ENCODE measurements at regions of chr11 and their contacts with region 1.

Region 1: GRCh38 chr11:130002846-130003716 is 446 bp upstream of the PRDM10 start:
- DNase-seq: peak; percentile 95 to 98 (median 98)
- H3K4me3 ChIP-seq: peak overlapping the region; percentile 52 to 86 (median 75)
- H3K4me3 Mint-ChIP-seq: peak overlapping the region; percentile 89 to 98
- H3K27ac ChIP-seq: peak overlapping the region; percentile 99 to 100
- H3K27ac Mint-ChIP-seq: peak overlapping the region; percentile 99 to 100 (median 100)
- H3K4me1 ChIP-seq: peaks cover 32 to 39% of the 10 kb centered on the region in 2 donors
- H3K4me1 Mint-ChIP-seq: peaks cover 43% of the 10 kb centered on the region
- H3K27me3 ChIP-seq: no peaks in the 10 kb centered on the region
- H3K27me3 Mint-ChIP-seq: no peaks in the 10 kb centered on the region
- CTCF ChIP-seq: no peak

Region 2: DNA sequence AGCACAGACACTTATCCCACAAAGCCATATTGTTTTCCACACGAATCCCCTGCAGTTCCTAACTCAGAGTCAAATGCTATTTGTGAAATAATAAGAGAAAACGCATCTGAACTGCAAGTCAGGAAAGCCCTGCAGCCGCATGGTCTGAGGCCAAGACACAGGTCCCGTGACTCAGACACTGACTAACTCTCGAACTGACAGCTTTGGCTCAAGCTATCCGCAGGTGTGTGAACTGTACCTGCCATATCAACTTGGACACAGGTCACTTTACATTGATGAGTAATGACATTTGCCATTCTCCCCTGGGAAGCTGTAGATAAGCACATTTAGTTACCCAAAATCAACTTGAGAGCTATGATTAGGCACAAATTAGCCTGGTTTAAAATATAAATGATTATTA is 72.8 kb before region 1 on chr11:
- intact Hi-C with region 1: loop called in 1 of 2 experiments (anchors 2 kb)
- DNase-seq: peak; percentile 59 to 90 (median 76)
- H3K4me3 ChIP-seq: peak overlapping the region in 1 of 3 experiments; percentile 61
- H3K4me3 Mint-ChIP-seq: peak overlapping the region in 1 of 2 donors; percentile 69
- H3K27ac ChIP-seq: peak overlapping the region; percentile 86 to 91
- H3K27ac Mint-ChIP-seq: peak overlapping the region; percentile 90 to 95 (median 93)
- H3K4me1 ChIP-seq: peaks cover 35 to 46% of the 10 kb centered on the region in 2 donors
- H3K4me1 Mint-ChIP-seq: peaks cover 45% of the 10 kb centered on the region
- H3K27me3 ChIP-seq: no peaks in the 10 kb centered on the region
- H3K27me3 Mint-ChIP-seq: no peaks in the 10 kb centered on the region
- CTCF ChIP-seq: no peak

Region 3: GRCh38 chr11:129973068-129973467 is 30.0 kb before region 1 on chr11:
- intact Hi-C with region 1: no loop called
- DNase-seq: peak in 1 of 3 donors; percentile 8
- H3K4me3 ChIP-seq: no peak overlapping the region
- H3K4me3 Mint-ChIP-seq: no peak overlapping the region
- H3K27ac ChIP-seq: peak overlapping the region; percentile 26 to 69
- H3K27ac Mint-ChIP-seq: peak overlapping the region in 6 of 7 donors; percentile 22 to 79 (median 61)
- H3K4me1 ChIP-seq: peaks cover 51 to 75% of the 10 kb centered on the region in 2 donors
- H3K4me1 Mint-ChIP-seq: peaks cover 77% of the 10 kb centered on the region
- H3K27me3 ChIP-seq: no peaks in the 10 kb centered on the region
- H3K27me3 Mint-ChIP-seq: peaks cover 0 to 4% (median 0%) of the 10 kb centered on the region in 3 donors
- CTCF ChIP-seq: no peak

Region 4: GRCh38 chr11:130042093-130042591 is 39.1 kb after region 1 on chr11:
- intact Hi-C with region 1: loop called in 1 of 2 experiments (anchors 2 kb)
- DNase-seq: peak; percentile 94 to 99 (median 96)
- H3K4me3 ChIP-seq: peak overlapping the region in 1 of 3 experiments; percentile 52
- H3K4me3 Mint-ChIP-seq: peak overlapping the region in 1 of 2 donors; percentile 31
- H3K27ac ChIP-seq: peak overlapping the region; percentile 86 to 94
- H3K27ac Mint-ChIP-seq: peak overlapping the region; percentile 91 to 97 (median 94)
- H3K4me1 ChIP-seq: peaks cover 43 to 56% of the 10 kb centered on the region in 2 donors
- H3K4me1 Mint-ChIP-seq: peaks cover 35% of the 10 kb centered on the region
- H3K27me3 ChIP-seq: no peaks in the 10 kb centered on the region
- H3K27me3 Mint-ChIP-seq: peaks cover 0 to 5% (median 2%) of the 10 kb centered on the region in 3 donors
- CTCF ChIP-seq: no peak

Region 5: DNA sequence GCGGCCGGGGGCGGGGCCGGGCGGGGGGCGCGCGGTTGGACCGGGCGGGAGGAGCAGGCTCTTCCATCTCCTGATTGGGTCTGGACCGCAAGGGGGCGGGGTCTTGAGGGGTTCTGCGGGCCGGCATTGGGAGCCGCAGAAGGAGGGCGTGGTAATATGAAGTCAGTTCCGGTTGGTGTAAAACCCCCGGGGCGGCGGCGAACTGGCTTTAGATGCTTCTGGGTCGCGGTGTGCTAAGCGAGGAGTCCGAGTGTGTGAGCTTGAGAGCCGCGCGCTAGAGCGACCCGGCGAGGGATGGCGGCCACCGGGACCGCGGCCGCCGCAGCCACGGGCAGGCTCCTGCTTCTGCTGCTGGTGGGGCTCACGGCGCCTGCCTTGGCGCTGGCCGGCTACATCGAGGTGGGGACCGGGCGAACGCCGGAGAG is 66.6 kb after region 1 on chr11 and contains the start of gene APLP2:
- intact Hi-C with region 1: loop called (anchors 1 to 5 kb)
- DNase-seq: peak; percentile 98 to 99 (median 99)
- H3K4me3 ChIP-seq: peak within 1 kb of the TSS; percentile 80 to 96 (median 96)
- H3K4me3 Mint-ChIP-seq: peak within 1 kb of the TSS; percentile 92 to 99
- H3K27ac ChIP-seq: peak within 1 kb of the TSS; percentile 76 to 86
- H3K27ac Mint-ChIP-seq: peak within 1 kb of the TSS; percentile 93 to 98 (median 97)
- H3K4me1 ChIP-seq: peaks cover 39 to 50% of the 10 kb centered on the region in 2 donors
- H3K4me1 Mint-ChIP-seq: peaks cover 45% of the 10 kb centered on the region
- H3K27me3 ChIP-seq: no peaks in the 10 kb centered on the region
- H3K27me3 Mint-ChIP-seq: no peaks in the 10 kb centered on the region
- CTCF ChIP-seq: no peak
- polyA plus RNA-seq, gene APLP2: 486 to 622 (median 591) TPM

Region 6: DNA sequence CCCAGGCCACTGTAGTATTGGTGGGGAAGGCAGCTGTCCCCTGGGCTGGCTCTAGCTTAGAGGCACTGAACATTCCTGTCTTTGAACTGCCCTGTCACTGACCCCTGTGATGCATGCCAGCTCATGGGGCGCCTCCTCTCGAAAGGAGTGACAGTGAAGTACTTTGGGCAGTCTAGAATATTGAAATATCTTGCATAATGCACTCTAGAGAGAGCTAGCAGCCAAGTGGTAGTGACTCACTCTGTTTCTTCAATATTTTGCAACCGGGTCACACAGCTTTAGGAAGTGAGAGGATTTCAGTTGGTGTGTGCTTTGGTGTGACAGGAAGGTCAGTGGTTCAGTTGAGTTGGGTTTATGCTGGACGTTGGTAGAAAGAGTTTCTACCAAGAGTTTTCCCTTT is 121.0 kb after region 1 on chr11:
- intact Hi-C with region 1: loop called in 1 of 2 experiments (anchors 2 kb)
- DNase-seq: peak; percentile 95 to 99 (median 98)
- H3K4me3 ChIP-seq: peak overlapping the region in 1 of 3 experiments; percentile 60
- H3K4me3 Mint-ChIP-seq: peak overlapping the region; percentile 62 to 72
- H3K27ac ChIP-seq: peak overlapping the region; percentile 91 to 96
- H3K27ac Mint-ChIP-seq: peak overlapping the region; percentile 98 to 100 (median 100)
- H3K4me1 ChIP-seq: peaks cover 77 to 85% of the 10 kb centered on the region in 2 donors
- H3K4me1 Mint-ChIP-seq: peaks cover 80% of the 10 kb centered on the region
- H3K27me3 ChIP-seq: no peaks in the 10 kb centered on the region
- H3K27me3 Mint-ChIP-seq: peaks cover 0 to 4% (median 2%) of the 10 kb centered on the region in 3 donors
- CTCF ChIP-seq: no peak

Region 7: GRCh38 chr11:130131961-130132850 is 129.1 kb after region 1 on chr11:
- intact Hi-C with region 1: loop called in 1 of 2 experiments (anchors 5 kb)
- DNase-seq: peak; percentile 59 to 72 (median 67)
- H3K4me3 ChIP-seq: no peak overlapping the region
- H3K4me3 Mint-ChIP-seq: no peak overlapping the region
- H3K27ac ChIP-seq: peak overlapping the region; percentile 22 to 72
- H3K27ac Mint-ChIP-seq: peak overlapping the region; percentile 74 to 92 (median 82)
- H3K4me1 ChIP-seq: peaks cover 4 to 5% of the 10 kb centered on the region in 2 donors
- H3K4me1 Mint-ChIP-seq: peaks cover 10% of the 10 kb centered on the region
- H3K27me3 ChIP-seq: no peaks in the 10 kb centered on the region
- H3K27me3 Mint-ChIP-seq: peaks cover 0 to 2% (median 0%) of the 10 kb centered on the region in 3 donors
- CTCF ChIP-seq: peak; percentile 94

Measured in CD14-positive monocyte (primary cell).